Activated T-helper 1 cell treated with anti-CD3 and anti-CD28 coated beads, Interleukin-12 subunit alpha, Interleukin-12 subunit beta, Interleukin-2, Interleukin-4 antibody, amounts not matched to agents 30 ng/mL and 10 ng/mL and 1 ng/mL, durations not matched to agents 14 hours and 24 hours and 36 hours (primary cell): ENCODE measurements at regions of chr2 and their contacts with region 1.

Region 1: DNA sequence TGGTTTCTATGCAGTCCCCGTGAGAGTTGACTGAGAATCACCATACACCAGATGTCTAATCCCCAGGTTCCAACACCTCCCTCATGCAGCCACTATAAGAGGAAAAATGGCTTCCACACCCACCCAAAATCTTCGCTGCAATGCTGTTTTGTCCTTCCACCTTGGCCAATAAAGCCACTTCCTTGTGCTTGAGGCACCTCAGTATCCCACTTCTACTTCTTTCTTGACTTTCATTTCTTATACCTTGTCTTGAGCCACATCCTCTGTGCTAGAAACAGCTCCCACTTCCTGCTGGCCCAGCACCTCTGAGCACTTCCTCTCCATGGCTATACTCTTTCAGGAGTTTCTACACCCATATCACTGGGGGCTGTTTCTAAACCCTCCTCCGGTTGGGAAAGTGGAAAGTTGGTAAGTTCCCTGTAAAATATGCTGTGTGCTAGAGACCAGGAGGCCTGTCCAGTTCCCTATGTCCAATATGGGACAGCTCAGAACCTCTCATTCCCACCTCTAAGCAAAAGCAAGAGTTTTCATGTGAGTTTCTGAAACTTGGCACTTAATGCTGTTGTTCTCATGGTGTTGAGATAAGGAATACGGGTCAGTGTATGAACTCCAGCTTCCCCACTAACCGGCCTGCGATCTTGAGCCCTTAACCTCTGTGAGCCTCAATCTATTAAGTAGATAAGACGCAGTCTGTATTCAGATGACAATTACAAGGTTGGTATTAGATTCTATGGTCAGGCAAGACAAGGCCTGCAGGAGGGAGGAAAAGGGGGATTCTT is 209.1 kb upstream of the ID2 start:
- DNase-seq: no peak
- H3K4me3 Mint-ChIP-seq: peak overlapping the region; percentile 13
- H3K27ac Mint-ChIP-seq: peak overlapping the region; percentile 62
- H3K4me1 Mint-ChIP-seq: peaks cover 82% of the 10 kb centered on the region
- H3K27me3 Mint-ChIP-seq: no peaks in the 10 kb centered on the region

Region 2: GRCh38 chr2:8310557-8311455 is 161.9 kb before region 1 on chr2:
- intact Hi-C with region 1: loop called (anchors 2 kb)
- DNase-seq: peak; percentile 51
- H3K4me3 Mint-ChIP-seq: peak overlapping the region; percentile 8
- H3K27ac Mint-ChIP-seq: peak overlapping the region; percentile 83
- H3K4me1 Mint-ChIP-seq: peaks cover 78% of the 10 kb centered on the region
- H3K27me3 Mint-ChIP-seq: peaks cover 2% of the 10 kb centered on the region

Region 3: GRCh38 chr2:8424997-8425900 is 47.5 kb before region 1 on chr2:
- intact Hi-C with region 1: loop called (anchors 5 kb)
- DNase-seq: no peak
- H3K4me3 Mint-ChIP-seq: no peak overlapping the region
- H3K27ac Mint-ChIP-seq: peak overlapping the region; percentile 80
- H3K4me1 Mint-ChIP-seq: peaks cover 32% of the 10 kb centered on the region
- H3K27me3 Mint-ChIP-seq: no peaks in the 10 kb centered on the region

Region 4: GRCh38 chr2:8456151-8456845 is 16.4 kb before region 1 on chr2:
- intact Hi-C with region 1: loop called (anchors 2 kb)
- DNase-seq: peak; percentile 58
- H3K4me3 Mint-ChIP-seq: peak overlapping the region; percentile 66
- H3K27ac Mint-ChIP-seq: peak overlapping the region; percentile 88
- H3K4me1 Mint-ChIP-seq: peaks cover 56% of the 10 kb centered on the region
- H3K27me3 Mint-ChIP-seq: peaks cover 22% of the 10 kb centered on the region